ENCODE measurements at regions of chr5 and their contacts with region 1.

Region 1: DNA sequence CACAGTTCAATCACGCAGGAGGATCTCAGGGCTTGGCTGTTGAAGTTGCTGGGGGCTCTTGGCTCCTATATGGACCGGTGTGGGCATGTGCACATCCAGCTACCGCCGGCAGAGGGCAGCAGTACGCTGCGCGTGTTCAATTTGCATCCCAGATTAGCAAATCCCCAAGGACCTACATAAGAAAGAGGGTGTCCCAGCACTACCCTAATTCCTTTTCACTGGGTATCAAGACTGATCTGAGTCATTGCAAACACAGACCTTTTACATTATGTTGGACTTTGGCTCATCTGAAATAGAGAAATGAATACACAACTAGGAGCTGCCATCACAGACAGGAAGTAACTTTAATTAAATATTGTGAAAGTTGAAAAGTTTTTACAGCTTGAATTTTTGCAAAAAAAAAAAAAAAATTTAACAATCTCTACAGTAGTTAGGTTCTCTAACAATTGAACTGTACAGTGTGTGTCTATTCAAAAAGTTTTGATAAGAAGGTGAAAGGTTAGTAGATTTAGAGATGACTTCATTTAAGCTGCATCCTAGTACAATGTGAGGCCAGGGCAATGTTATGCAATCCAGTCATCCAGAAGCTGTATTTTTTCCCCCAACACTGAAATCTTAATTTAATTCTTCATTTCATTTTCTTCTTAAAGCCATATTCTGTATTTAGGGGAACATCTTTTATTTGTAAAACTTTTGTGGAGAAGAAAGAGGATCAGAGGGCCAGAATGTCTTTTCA is 404.0 kb downstream of the EBF1 start:
- DNase-seq: peak; percentile 75
- H3K4me3 ChIP-seq: no peak overlapping the region
- H3K27ac ChIP-seq: no peak overlapping the region
- H3K4me1 ChIP-seq: no peaks in the 10 kb centered on the region
- H3K27me3 ChIP-seq: no peaks in the 10 kb centered on the region
- CTCF ChIP-seq: peak; percentile 78 to 92
- POLR2A ChIP-seq: no peak

Region 2: GRCh38 chr5:157820593-157821252 is 875.0 kb before region 1 on chr5:
- CTCF ChIA-PET with region 1: no interaction called
- POLR2A ChIA-PET with region 1: no interaction called
- dilution Hi-C with region 1: no loop called
- intact Hi-C with region 1: loop called (anchors 1 kb)
- DNase-seq: peak; percentile 80
- H3K4me3 ChIP-seq: no peak overlapping the region
- H3K27ac ChIP-seq: no peak overlapping the region
- H3K4me1 ChIP-seq: peaks cover 14% of the 10 kb centered on the region
- H3K27me3 ChIP-seq: no peaks in the 10 kb centered on the region
- CTCF ChIP-seq: peak; percentile 36 to 39
- POLR2A ChIP-seq: no peak

Region 3: GRCh38 chr5:157961828-157962590 is 733.8 kb before region 1 on chr5:
- CTCF ChIA-PET with region 1: no interaction called
- POLR2A ChIA-PET with region 1: no interaction called
- dilution Hi-C with region 1: no loop called
- intact Hi-C with region 1: no loop called
- DNase-seq: peak; percentile 6
- H3K4me3 ChIP-seq: no peak overlapping the region
- H3K27ac ChIP-seq: no peak overlapping the region
- H3K4me1 ChIP-seq: no peaks in the 10 kb centered on the region
- H3K27me3 ChIP-seq: no peaks in the 10 kb centered on the region
- CTCF ChIP-seq: no peak
- POLR2A ChIP-seq: no peak

Region 4: DNA sequence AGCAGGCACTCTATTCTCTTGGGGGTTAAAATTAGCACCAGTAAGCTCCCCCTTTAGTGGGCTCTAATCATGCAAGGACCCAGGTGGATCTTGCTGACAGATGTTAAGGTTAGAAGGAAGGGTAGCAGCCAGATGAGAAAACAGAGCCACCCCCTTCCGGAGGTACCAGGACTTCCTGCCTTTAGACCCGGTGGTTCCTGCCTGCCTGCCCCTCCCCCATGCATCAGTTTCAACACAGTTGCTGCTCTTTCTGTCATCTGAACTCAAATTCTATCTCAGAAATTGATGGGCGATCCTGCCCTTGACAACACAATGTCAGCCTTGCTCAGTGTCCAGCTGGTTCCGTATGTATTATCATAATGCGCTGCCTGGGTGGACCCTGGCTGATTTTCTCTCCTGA is 116.6 kb after region 1 on chr5:
- CTCF ChIA-PET with region 1: no interaction called
- POLR2A ChIA-PET with region 1: no interaction called
- dilution Hi-C with region 1: no loop called
- intact Hi-C with region 1: loop called (anchors 5 kb)
- DNase-seq: peak; percentile 13
- H3K4me3 ChIP-seq: no peak overlapping the region
- H3K27ac ChIP-seq: peak overlapping the region; percentile 17
- H3K4me1 ChIP-seq: peaks cover 13% of the 10 kb centered on the region
- H3K27me3 ChIP-seq: no peaks in the 10 kb centered on the region
- CTCF ChIP-seq: no peak
- POLR2A ChIP-seq: no peak

Region 5: GRCh38 chr5:159094745-159095144 is 399.0 kb after region 1 on chr5:
- CTCF ChIA-PET with region 1: interaction called, 13 read pairs
- POLR2A ChIA-PET with region 1: no interaction called
- dilution Hi-C with region 1: no loop called
- intact Hi-C with region 1: no loop called
- DNase-seq: peak; percentile 11
- H3K4me3 ChIP-seq: no peak overlapping the region
- H3K27ac ChIP-seq: no peak overlapping the region
- H3K4me1 ChIP-seq: peaks cover 8% of the 10 kb centered on the region
- H3K27me3 ChIP-seq: peaks cover 32 to 33% of the 10 kb centered on the region in 2 experiments
- CTCF ChIP-seq: no peak
- POLR2A ChIP-seq: no peak

Region 6: GRCh38 chr5:159133041-159133741 is 437.4 kb after region 1 on chr5:
- CTCF ChIA-PET with region 1: interaction called, 40 read pairs
- POLR2A ChIA-PET with region 1: interaction called, 6 read pairs
- dilution Hi-C with region 1: loop called (anchors 25 kb)
- intact Hi-C with region 1: loop called (anchors 1 kb)
- DNase-seq: peak; percentile 62
- H3K4me3 ChIP-seq: no peak overlapping the region
- H3K27ac ChIP-seq: no peak overlapping the region
- H3K4me1 ChIP-seq: no peaks in the 10 kb centered on the region
- H3K27me3 ChIP-seq: peaks cover 2 to 9% of the 10 kb centered on the region in 2 experiments
- CTCF ChIP-seq: peak; percentile 45 to 46
- POLR2A ChIP-seq: no peak